ENCODE measurements at regions of chr13 and their contacts with region 1.

Region 1: DNA sequence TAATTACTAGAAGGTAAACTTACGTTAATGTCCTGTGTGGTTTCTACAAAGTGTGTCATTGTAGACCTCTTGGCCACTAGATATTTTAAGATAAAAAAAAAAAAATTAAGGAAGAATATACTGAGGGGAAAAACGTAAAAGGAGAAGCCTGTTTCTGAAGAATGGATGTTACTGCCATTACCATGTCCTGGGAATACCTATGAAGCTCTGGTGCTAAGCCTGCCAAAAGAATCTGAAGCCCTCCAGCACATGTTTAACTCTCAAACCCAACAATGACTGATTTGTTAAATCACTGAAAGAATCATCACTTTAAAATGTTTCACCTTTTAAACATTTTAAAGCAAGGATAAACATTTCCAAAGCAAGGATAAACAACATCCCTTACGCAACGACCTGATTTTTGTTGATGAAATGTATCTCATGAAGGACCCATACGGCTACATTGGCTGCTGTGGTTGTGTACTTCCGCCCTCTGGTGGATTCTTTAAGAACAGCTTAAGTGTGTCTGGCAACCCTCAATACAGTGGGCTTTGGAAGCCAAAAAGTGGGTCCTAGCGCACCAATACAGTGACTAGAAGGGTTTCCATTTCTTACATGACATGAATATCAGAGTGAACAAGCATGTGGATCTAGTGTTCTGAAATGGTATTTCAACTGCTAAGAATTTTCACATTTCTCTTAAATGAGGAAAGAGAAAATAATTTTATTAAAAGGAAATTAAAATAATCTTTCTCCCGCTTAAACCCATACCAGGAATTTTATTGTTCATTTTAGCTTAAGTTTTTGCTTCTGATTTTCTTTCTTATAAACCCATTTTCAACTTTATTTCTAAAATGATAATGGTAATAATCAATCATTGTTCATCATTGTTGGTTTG is 74.5 kb upstream of the RAP2A start:
- DNase-seq: no peak
- ATAC-seq: peak; percentile 88

Region 2: GRCh38 chr13:97026531-97027161 is 332.8 kb before region 1 on chr13:
- intact Hi-C with region 1: loop called (anchors 10 kb)
- DNase-seq: no peak
- ATAC-seq: no peak

Region 3: DNA sequence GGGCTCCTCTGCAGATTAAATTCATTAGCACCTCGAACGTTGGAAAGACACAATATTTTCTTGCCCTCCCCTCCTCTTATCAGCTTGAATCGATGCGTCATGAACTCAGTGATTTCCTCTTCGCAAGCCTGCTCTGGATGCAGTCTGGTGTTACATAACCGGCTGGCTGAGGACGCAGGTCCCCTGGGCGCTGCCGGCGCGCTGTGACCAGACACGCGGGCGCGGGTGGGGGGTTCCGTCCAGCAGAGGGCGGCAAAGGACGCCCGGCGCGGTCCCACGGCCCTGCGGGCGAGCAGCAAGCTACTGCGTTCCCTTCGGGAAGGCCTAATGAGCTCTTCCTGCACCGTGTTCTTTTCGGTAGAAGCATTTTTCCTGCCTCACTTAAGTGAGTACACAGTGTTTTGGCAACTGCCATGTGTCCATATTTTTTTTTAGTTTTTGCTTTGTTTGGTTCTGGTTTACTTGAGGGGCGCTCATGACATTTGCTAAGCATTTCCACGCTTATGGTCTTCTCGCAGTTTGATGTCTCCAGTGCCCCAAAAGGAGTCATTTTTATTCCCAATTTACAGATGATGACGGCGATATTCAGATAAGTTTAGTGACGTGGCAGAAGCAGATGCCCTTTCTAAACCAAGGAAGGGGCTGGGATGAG is 249.5 kb before region 1 on chr13:
- intact Hi-C with region 1: loop called (anchors 5 kb)
- DNase-seq: peak; percentile 96
- ATAC-seq: peak; percentile 98

Region 4: GRCh38 chr13:97261254-97262005 is 98.0 kb before region 1 on chr13:
- intact Hi-C with region 1: no loop called
- DNase-seq: no peak
- ATAC-seq: peak; percentile 75

Region 5: GRCh38 chr13:97432917-97433726 is 73.7 kb after region 1 on chr13:
- intact Hi-C with region 1: loop called (anchors 10 kb)
- DNase-seq: peak; percentile 98
- ATAC-seq: peak; percentile 92